ENCODE measurements at regions of chr6 and their contacts with region 1.

Region 1: DNA sequence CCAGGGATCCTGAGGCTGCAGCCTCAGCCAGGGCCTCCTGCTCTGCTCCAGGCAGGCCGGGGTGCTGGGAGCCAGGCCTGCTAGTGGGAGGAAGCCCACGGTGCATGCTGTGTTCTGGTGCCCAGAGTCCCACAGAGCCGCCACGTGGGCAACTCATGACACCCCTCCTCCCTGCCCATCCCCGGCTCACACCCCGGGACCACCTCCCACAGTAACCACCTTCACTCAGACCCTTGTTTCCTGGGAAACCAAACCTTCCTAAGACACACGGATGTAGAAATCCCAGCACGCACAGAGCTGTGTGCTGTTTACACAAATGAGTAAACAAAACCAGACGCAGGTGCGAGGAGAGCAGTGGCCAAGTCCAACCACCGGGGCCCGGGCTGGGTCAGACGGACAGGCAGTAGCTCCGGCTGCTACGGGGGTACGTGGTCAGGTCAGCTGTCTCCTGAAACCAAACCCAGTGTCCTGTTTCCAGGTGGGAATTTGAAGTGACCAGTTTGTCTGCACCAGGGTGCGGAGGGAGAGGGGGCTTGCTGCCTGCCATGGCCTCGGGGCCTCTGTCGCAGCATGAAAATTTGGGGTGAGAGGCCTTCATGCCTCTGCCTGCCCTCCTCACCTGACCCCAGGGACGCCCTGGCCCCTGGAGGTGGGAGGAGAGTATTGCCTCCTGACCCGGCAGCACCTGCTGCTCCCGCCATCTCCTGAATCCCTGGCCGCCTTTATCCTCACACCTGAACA is 52.2 kb upstream of the SMOC2 start:
- DNase-seq: peak in 1 of 2 donors; percentile 69
- ATAC-seq: no peak
- H3K4me3 ChIP-seq: no peak overlapping the region
- H3K27ac ChIP-seq: no peak overlapping the region
- H3K4me1 ChIP-seq: peaks cover 0 to 4% of the 10 kb centered on the region in 2 donors
- H3K27me3 ChIP-seq: no peaks in the 10 kb centered on the region

Region 2: DNA sequence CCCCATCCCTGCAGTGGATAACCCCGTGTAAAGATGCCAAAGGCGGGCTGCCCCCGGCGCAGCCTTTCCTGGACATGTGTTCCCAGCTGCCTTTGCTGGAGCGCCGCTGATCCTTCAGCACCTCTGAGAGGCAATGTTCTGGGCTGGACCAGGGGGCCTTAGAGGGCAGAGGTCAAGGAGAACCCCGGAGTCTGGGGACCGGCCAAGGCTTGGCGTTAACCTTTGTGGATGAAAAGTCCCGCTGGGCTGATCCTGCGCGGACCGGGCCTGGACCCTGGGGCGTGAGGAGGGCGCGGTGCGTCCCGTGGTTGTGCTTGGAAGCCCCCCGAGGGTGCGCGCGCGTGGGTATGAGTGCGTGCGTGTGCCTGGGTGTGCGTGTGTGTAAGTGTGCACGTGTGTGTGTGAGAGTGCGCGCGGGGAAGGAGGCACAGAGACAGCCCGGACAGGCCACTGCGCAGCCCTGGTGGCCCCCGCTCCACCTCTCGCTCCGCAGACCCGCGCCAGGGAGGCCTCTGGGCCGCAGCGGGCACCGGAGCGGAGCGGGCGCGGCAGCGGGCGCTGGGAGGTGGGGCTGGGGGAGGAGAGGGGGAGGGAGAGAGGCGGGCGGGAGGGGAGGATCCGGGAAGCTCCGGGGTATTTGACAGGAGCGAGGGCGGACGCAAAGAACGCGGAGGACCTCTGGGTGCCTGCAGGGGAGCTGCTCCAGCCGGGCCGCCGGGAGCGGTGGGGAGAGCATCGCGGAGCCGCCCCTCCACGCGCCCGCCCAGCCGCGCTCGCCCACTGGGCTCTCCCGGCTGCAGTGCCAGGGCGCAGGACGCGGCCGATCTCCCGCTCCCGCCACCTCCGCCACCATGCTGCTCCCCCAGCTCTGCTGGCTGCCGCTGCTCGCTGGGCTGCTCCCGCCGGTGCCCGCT is 52.0 kb after region 1 on chr6 and contains the start of gene SMOC2:
- intact Hi-C with region 1: loop called (anchors 2 to 5 kb)
- DNase-seq: peak; percentile 76 to 86
- ATAC-seq: peak; percentile 74
- H3K4me3 ChIP-seq: peak within 1 kb of the TSS; percentile 58 to 88
- H3K27ac ChIP-seq: peak within 1 kb of the TSS; percentile 30 to 36
- H3K4me1 ChIP-seq: peaks cover 2% of the 10 kb centered on the region in 2 donors
- H3K27me3 ChIP-seq: no peaks in the 10 kb centered on the region
- total RNA-seq, gene SMOC2: 203 to 369 TPM

Region 3: GRCh38 chr6:168542301-168542700 is 153.5 kb after region 1 on chr6:
- intact Hi-C with region 1: loop called in 1 of 2 experiments (anchors 5 kb)
- DNase-seq: no peak
- ATAC-seq: peak; percentile 31
- H3K4me3 ChIP-seq: no peak overlapping the region
- H3K27ac ChIP-seq: peak overlapping the region; percentile 50 to 93
- H3K4me1 ChIP-seq: peaks cover 0 to 4% of the 10 kb centered on the region in 2 donors
- H3K27me3 ChIP-seq: no peaks in the 10 kb centered on the region

Measured in aorta (tissue), 5 donors.